CD4-positive, alpha-beta memory T cell (primary cell): ENCODE measurements at regions of chr12 and their contacts with region 1.

Region 1: GRCh38 chr12:48189331-48190125 is 6.1 kb downstream of the CCDC184 start:
- DNase-seq: peak; percentile 59 to 65 (median 64)
- H3K4me3 ChIP-seq: no peak overlapping the region
- H3K4me3 Mint-ChIP-seq: no peak overlapping the region
- H3K27ac ChIP-seq: no peak overlapping the region
- H3K27ac Mint-ChIP-seq: peak overlapping the region in 1 of 7 donors; percentile 14
- H3K4me1 ChIP-seq: peaks cover 1% of the 10 kb centered on the region
- H3K4me1 Mint-ChIP-seq: peaks cover 0 to 8% (median 2%) of the 10 kb centered on the region in 4 donors
- H3K27me3 ChIP-seq: no peaks in the 10 kb centered on the region
- H3K27me3 Mint-ChIP-seq: peaks cover 16 to 18% of the 10 kb centered on the region in 2 donors

Region 2: GRCh38 chr12:47941851-47942601 is 247.5 kb before region 1 on chr12:
- CTCF ChIA-PET with region 1: interaction called, 3 read pairs
- POLR2A ChIA-PET with region 1: no interaction called
- intact Hi-C with region 1: loop called (anchors 1 kb)
- DNase-seq: peak; percentile 37 to 50 (median 40)
- H3K4me3 ChIP-seq: no peak overlapping the region
- H3K4me3 Mint-ChIP-seq: no peak overlapping the region
- H3K27ac ChIP-seq: no peak overlapping the region
- H3K27ac Mint-ChIP-seq: no peak overlapping the region
- H3K4me1 ChIP-seq: no peaks in the 10 kb centered on the region
- H3K4me1 Mint-ChIP-seq: peaks cover 0 to 9% (median under 1%) of the 10 kb centered on the region in 4 donors
- H3K27me3 ChIP-seq: no peaks in the 10 kb centered on the region
- H3K27me3 Mint-ChIP-seq: peaks cover 13 to 15% of the 10 kb centered on the region in 2 donors

Region 3: DNA sequence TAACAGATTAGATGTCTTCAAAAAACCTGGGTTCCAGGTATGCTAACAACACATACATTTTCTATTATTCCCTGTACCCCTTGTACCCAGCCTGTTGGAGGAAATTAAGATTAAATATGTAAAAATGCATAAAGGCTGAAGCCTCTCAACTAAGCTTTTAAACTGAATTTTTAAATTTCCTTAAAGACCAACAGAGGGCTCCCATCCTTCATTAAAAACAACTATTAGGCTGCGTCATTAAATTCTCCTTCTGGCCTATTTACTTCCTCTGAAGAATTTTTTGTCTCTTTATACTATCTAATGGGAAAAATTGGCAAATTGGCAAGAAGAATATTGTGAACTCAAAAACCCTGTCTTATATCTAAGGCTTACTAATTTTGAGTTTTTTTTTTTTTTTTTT is 105.5 kb before region 1 on chr12:
- CTCF ChIA-PET with region 1: interaction called, 10 read pairs
- POLR2A ChIA-PET with region 1: no interaction called
- intact Hi-C with region 1: no loop called
- DNase-seq: no peak
- H3K4me3 ChIP-seq: no peak overlapping the region
- H3K4me3 Mint-ChIP-seq: no peak overlapping the region
- H3K27ac ChIP-seq: no peak overlapping the region
- H3K27ac Mint-ChIP-seq: peak overlapping the region in 1 of 7 donors; percentile 17
- H3K4me1 ChIP-seq: no peaks in the 10 kb centered on the region
- H3K4me1 Mint-ChIP-seq: no peaks in the 10 kb centered on the region
- H3K27me3 ChIP-seq: no peaks in the 10 kb centered on the region
- H3K27me3 Mint-ChIP-seq: no peaks in the 10 kb centered on the region

Region 4: GRCh38 chr12:48336562-48336961 is 147.0 kb after region 1 on chr12:
- CTCF ChIA-PET with region 1: no interaction called
- POLR2A ChIA-PET with region 1: no interaction called
- intact Hi-C with region 1: no loop called
- DNase-seq: no peak
- H3K4me3 ChIP-seq: no peak overlapping the region
- H3K4me3 Mint-ChIP-seq: no peak overlapping the region
- H3K27ac ChIP-seq: no peak overlapping the region
- H3K27ac Mint-ChIP-seq: peak overlapping the region in 2 of 7 donors; percentile 1 to 72
- H3K4me1 ChIP-seq: peaks cover 9% of the 10 kb centered on the region
- H3K4me1 Mint-ChIP-seq: peaks cover 10 to 19% (median 13%) of the 10 kb centered on the region in 4 donors
- H3K27me3 ChIP-seq: no peaks in the 10 kb centered on the region
- H3K27me3 Mint-ChIP-seq: no peaks in the 10 kb centered on the region